Activated naive CD4-positive, alpha-beta T cell treated with anti-CD3 and anti-CD28 coated beads, Interleukin-2, amount 10 ng/mL, durations not matched to agents 7 days and 5 days (primary cell): ENCODE measurements at regions of chr18 and their contacts with region 1.

Region 1: DNA sequence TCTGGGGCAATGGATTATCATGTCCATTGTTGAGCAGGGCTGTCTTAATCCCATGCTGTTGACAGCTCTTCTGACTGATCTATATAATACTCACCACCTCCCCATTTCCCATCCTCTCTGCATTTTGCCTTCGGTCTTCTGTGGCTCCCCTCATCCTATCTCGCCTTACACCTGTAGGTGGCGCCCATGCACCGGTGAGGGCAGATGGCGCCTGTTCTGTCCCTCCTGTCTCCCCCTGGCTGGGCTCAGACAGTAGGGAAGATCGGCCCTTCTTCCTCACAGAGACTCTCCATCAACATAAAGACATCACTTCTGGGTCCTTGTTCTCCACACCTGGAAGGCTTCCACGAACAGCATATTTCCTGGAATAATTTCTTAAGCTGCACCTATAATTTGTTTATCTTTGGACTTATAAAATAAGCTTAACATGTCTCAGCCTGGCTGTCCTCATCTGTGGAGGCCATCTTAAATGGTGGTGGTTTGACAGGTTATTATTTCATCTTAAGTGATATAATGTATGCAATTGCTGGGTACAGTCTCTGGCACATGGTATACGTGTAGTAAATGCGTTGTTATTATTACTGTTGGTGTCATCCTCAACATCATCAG is 10.9 kb upstream of the CDH20 start:
- DNase-seq: peak; percentile 42
- H3K4me3 Mint-ChIP-seq: no peak overlapping the region
- H3K27ac Mint-ChIP-seq: no peak overlapping the region
- H3K4me1 Mint-ChIP-seq: no peaks in the 10 kb centered on the region
- H3K27me3 Mint-ChIP-seq: no peaks in the 10 kb centered on the region

Region 2: GRCh38 chr18:61047794-61048193 is 274.6 kb before region 1 on chr18:
- CTCF ChIA-PET with region 1: no interaction called
- DNase-seq: no peak
- H3K4me3 Mint-ChIP-seq: no peak overlapping the region
- H3K27ac Mint-ChIP-seq: no peak overlapping the region
- H3K4me1 Mint-ChIP-seq: no peaks in the 10 kb centered on the region
- H3K27me3 Mint-ChIP-seq: no peaks in the 10 kb centered on the region

Region 3: GRCh38 chr18:61502472-61502871 is 180.1 kb after region 1 on chr18:
- CTCF ChIA-PET with region 1: interaction called, 17 read pairs
- DNase-seq: no peak
- H3K4me3 Mint-ChIP-seq: no peak overlapping the region
- H3K27ac Mint-ChIP-seq: no peak overlapping the region
- H3K4me1 Mint-ChIP-seq: no peaks in the 10 kb centered on the region
- H3K27me3 Mint-ChIP-seq: no peaks in the 10 kb centered on the region